Activated T-helper 1 cell treated with anti-CD3 and anti-CD28 coated beads, Interleukin-12 subunit alpha, Interleukin-12 subunit beta, Interleukin-2, Interleukin-4 antibody, amounts not matched to agents 30 ng/mL and 10 ng/mL and 1 ng/mL, durations not matched to agents 14 hours and 24 hours and 36 hours (primary cell): ENCODE measurements at regions of chr17 and their contacts with region 1.

Region 1: DNA sequence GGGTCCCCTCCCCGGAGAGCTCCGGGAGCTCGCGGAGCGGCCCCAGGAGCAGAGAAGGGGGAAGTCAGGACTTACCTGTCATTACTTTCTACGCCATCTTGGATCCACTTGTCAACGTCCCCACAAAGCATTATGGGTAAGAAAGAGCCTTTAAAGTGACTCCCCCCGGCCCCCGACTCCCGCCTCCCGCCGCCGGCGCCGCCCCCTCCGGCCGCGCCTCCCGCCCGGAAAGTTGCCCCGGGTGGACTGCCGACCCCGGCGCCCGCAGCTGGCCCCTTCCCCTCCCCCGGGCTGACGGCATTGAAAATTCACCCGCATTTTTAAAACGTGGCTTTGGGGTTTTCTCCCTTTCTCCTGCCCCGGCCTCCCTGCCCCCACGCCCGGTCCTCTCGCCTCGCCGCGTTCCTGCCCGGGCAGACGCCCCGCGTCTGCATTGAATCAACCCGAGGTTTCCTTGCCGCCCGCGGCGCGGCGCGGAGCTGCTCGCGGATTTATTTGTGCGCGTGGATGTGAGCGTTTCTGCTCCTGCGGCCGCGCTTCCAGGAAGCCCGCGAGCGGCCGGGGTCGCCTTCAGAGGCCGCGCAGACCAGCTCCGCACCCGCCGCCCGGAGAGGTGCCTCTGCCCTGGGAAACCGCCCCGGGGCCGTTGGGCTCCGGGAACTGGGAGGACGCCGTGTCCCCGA is at the start of gene HELZ:
- DNase-seq: peak; percentile 70
- H3K4me3 Mint-ChIP-seq: peak within 1 kb of the TSS; percentile 89
- H3K27ac Mint-ChIP-seq: peak within 1 kb of the TSS; percentile 78
- H3K4me1 Mint-ChIP-seq: peaks cover 44% of the 10 kb centered on the region
- H3K27me3 Mint-ChIP-seq: peaks cover 4% of the 10 kb centered on the region
- total RNA-seq, gene HELZ: 65.8 and 70.4 TPM in 2 replicates

Region 2: DNA sequence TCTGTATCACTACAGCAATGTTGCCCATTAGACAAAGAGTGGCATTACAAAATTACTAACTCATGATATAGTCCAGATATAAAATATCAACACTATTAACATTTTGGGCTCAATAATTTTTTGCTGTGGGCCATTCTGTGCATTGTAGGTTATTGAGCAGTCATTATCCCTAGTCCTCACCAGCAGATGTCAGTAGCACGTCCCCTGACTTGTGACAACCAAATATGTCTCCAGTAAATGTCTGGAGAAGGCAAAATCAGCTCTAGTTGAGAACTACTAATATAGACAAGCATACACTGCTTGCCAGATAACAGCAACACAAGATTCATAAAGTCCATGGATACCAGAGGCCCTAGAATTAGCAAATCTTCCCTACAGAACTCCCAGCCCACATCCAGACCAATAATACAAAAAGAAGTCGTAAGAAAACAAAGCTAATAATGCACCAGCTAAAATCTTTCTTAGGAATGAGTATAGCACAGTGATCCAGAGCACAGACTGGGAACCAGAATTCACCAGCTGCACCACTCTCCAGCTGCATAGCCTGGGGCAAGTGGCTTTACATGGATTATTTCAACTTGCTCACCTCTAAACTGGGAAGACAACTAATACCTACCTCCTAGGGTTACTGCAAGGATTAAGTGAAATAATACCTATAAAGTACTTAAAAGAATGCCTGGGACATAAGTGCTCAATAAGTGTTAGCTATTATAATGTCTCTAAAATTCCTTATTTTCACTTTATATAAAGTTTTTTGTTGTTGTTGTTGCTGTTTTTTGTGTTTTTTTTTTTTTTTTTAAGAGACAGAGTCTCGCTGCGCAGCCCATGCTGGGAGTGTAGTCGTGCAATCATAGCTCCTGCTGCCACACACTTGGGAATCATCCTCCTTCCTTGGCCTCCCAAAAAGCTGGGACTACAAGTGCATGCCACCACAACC is 23.9 kb before region 1 on chr17:
- intact Hi-C with region 1: loop called (anchors 1 kb)
- DNase-seq: peak; percentile 25
- H3K4me3 Mint-ChIP-seq: no peak overlapping the region
- H3K27ac Mint-ChIP-seq: peak overlapping the region; percentile 40
- H3K4me1 Mint-ChIP-seq: peaks cover 42% of the 10 kb centered on the region
- H3K27me3 Mint-ChIP-seq: no peaks in the 10 kb centered on the region

Region 3: DNA sequence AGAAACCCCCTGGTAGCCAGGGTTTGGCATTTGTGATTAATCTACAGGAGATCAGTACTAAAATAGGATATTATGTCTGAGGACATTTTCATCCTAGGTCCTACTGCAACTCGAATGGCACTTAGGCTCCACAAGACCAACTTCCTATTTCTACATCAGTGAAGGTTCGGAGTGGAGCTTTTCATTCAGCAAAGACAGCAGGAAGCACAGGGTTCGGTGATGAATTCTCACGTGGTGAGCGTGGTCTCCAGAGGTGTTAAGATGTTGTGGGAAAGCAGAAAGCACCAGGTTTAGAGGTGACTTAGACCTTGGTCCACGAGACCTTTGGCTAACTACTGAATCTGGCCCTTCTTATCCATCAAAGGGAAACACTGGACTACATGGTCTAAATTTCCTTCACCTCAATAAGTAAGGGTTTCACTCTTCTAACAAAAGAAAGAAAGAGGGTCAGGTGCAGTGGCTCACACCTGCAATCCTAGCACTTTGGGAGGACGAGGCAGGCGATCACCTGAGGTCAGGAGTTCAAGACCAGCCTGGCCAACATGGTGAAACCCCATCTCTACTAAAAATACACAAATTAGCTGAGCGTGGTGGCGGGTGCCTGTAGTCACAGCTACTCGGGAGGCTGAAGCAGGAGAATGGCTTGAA is 13.7 kb after region 1 on chr17:
- intact Hi-C with region 1: loop called (anchors 1 kb)
- DNase-seq: peak; percentile 39
- H3K4me3 Mint-ChIP-seq: peak overlapping the region; percentile 61
- H3K27ac Mint-ChIP-seq: peak overlapping the region; percentile 62
- H3K4me1 Mint-ChIP-seq: peaks cover 40% of the 10 kb centered on the region
- H3K27me3 Mint-ChIP-seq: no peaks in the 10 kb centered on the region

Region 4: DNA sequence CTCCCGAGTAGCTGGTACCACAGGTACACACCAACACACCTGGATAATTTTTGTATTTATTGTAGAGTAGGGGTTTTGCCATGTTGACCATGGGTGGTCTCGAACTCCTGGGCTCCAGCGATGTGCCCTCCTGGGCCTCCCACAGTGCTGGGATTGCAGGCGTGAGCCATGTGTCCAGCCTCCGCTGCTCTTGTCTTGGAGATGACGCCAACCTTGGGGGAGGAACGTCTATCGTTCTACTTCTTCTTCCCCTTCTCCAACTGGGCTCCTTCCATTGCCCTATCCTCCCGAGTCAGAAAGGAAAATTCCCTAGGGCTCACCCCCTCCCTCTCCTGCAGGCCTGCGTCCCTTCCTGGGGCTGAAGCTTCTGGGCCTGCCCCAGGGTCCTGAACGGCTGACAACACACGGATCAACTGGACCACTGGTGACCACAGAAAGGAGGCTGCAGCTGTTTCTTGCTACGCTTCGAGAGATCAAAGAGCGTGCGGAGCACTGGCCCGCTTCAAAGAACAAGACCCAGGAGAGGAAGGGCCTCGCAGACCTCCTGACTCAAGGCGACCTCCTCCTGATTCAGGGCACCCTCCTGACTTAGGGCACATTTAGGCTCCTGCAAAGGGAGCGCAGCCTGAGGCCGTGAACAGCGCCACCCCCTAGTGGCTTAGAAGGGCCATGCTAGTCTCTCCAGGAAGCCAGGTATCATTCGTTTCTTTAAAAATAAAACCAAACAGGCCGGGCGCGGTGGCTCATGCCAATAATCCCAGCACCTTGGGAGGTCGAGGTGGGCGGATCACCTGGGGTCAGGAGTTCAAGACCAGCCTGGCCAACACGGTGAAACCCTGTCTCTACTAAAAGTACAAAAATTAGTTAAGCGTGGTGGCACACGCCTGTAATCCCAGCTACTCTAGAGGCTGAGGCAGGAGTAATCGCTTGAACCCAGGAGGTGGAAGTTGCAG is 48.3 kb after region 1 on chr17:
- intact Hi-C with region 1: loop called (anchors 1 kb)
- DNase-seq: peak; percentile 54
- H3K4me3 Mint-ChIP-seq: no peak overlapping the region
- H3K27ac Mint-ChIP-seq: no peak overlapping the region
- H3K4me1 Mint-ChIP-seq: peaks cover 4% of the 10 kb centered on the region
- H3K27me3 Mint-ChIP-seq: peaks cover 5% of the 10 kb centered on the region

Region 5: GRCh38 chr17:67366193-67367157 is 121.3 kb after region 1 on chr17 and contains the start of gene PSMD12:
- intact Hi-C with region 1: loop called (anchors 2 kb)
- DNase-seq: peak; percentile 92
- H3K4me3 Mint-ChIP-seq: peak within 1 kb of the TSS; percentile 96
- H3K27ac Mint-ChIP-seq: peak within 1 kb of the TSS; percentile 94
- H3K4me1 Mint-ChIP-seq: peaks cover 52% of the 10 kb centered on the region
- H3K27me3 Mint-ChIP-seq: no peaks in the 10 kb centered on the region
- total RNA-seq, gene PSMD12: 87.4 TPM in 2 replicates

Region 6: DNA sequence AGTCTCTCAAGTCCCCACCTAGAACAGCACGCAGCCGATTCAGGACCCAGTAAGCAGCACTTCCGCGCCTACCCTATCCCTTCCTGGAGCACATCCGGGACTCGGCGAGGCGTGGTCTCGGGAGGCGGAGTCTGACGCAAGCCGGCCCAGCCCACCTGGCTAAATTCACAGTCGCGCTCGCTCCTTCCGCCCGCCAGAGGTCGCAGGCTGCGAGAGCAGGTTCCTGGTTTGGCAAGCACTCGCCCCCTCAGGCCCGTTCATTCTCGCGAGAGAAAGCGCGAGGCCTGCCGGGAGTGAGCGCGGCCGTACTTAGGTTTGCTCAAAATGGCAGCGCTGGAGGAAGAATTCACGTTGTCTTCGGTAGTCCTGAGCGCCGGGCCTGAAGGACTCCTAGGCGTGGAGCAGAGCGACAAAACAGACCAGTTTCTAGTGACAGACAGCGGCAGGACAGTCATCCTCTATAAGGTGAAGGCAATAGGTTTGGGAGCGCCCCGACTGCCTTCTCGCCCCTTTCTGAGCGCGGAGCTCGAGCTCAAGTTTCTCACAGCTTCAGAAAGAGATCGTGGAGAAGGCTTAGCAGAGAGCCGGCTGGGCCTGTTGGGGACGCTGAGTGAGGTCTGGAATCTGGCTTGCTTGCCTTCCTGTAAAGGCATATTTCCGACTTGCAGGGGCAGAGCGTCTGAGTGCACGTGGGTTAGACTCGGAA is 472.6 kb after region 1 on chr17 and contains the start of gene NOL11:
- intact Hi-C with region 1: loop called (anchors 1 kb)
- DNase-seq: peak; percentile 99
- H3K4me3 Mint-ChIP-seq: peak within 1 kb of the TSS; percentile 99
- H3K27ac Mint-ChIP-seq: peak within 1 kb of the TSS; percentile 99
- H3K4me1 Mint-ChIP-seq: peaks cover 16% of the 10 kb centered on the region
- H3K27me3 Mint-ChIP-seq: peaks cover 4% of the 10 kb centered on the region
- total RNA-seq, gene NOL11: 107 and 118 TPM in 2 replicates